ENCODE measurements at regions of chr11 and their contacts with region 1.

Region 1: GRCh38 chr11:62383822-62384221 is 35.0 kb upstream of the SCGB1A1 start:
- DNase-seq: no peak
- ATAC-seq: no peak
- H3K4me3 Mint-ChIP-seq: no peak overlapping the region
- H3K27ac Mint-ChIP-seq: no peak overlapping the region
- H3K4me1 Mint-ChIP-seq: peaks cover 5% of the 10 kb centered on the region
- H3K27me3 Mint-ChIP-seq: no peaks in the 10 kb centered on the region
- CTCF ChIP-seq: no peak

Region 2: DNA sequence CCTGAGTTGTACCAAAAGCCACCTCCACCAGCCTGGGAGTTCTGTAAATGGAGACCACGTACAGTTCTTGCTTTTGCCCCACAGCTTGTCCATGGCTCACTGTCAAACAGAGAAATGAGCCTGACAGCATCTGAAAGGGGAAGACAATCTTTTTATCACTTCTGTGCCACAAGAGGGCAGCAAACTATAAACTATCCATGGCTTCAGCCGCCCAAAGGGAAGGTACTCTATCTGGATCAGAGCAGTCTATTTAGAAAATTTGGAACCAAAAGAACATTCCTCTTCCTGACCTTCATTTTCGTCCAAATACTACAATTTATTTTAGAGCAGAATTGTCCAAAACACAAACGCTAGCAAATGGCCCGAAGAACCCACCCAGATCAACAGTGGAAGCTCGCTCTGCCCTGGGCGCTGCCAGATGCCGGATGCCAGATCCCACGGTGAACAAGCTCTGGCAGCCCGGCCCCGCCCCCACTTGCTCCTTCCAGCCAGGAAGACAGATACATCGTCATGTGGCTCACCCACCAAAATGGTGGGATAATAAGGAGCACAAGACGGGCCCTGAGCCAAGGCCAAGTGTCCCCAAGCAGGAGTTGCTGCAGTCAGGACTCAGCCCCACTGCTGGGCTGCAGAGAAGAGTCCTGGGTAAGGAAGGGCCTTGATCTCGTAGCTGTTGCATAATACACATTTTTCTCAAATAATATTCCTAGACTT is 11.2 kb after region 1 on chr11:
- CTCF ChIA-PET with region 1: interaction called, 5 read pairs
- POLR2A ChIA-PET with region 1: no interaction called
- intact Hi-C with region 1: loop called (anchors 1 kb)
- DNase-seq: no peak
- ATAC-seq: peak; percentile 79
- H3K4me3 Mint-ChIP-seq: no peak overlapping the region
- H3K27ac Mint-ChIP-seq: no peak overlapping the region
- H3K4me1 Mint-ChIP-seq: no peaks in the 10 kb centered on the region
- H3K27me3 Mint-ChIP-seq: peaks cover 6% of the 10 kb centered on the region
- CTCF ChIP-seq: no peak

Region 3: GRCh38 chr11:63023841-63024648 is 640.2 kb after region 1 on chr11:
- CTCF ChIA-PET with region 1: no interaction called
- POLR2A ChIA-PET with region 1: no interaction called
- intact Hi-C with region 1: loop called (anchors 2 kb)
- DNase-seq: peak; percentile 75
- ATAC-seq: peak; percentile 94
- H3K4me3 Mint-ChIP-seq: no peak overlapping the region
- H3K27ac Mint-ChIP-seq: no peak overlapping the region
- H3K4me1 Mint-ChIP-seq: peaks cover 4% of the 10 kb centered on the region
- H3K27me3 Mint-ChIP-seq: peaks cover 29% of the 10 kb centered on the region
- CTCF ChIP-seq: peak; percentile 99